ENCODE measurements at regions of chr13 and their contacts with region 1.

Region 1: DNA sequence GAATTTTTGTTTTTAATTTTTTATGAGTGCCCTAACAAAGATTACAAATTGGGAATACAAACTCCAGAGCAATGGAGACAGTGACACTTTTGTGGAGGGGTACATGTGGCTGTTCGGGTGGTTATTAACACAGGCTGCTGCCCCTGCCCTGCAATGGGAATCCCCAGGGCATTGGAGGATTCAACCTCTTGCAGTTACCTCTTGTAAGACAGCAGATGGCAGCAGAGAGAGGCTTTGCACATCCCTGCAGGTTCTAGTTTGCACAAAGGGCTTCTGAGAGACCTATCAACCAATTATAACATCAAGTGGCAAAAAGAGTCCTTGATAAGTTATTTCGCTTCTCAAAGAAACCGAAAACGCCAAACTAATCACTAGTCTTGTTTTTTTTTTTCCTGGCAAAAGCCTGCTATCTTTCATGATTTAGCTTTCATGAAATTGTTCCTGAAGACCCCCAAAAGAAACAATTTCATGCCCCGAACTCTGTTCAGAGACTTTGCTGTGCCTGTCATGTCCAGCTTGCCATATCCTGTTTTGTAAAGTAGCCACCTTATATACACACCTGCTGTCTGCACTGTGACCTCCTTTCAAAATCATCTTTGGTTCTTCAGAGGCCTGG is 10.4 kb downstream of the GJB2 start:
- DNase-seq: no peak
- ATAC-seq: peak; percentile 80 to 83
- H3K4me3 ChIP-seq: no peak overlapping the region
- H3K27ac ChIP-seq: no peak overlapping the region
- H3K4me1 ChIP-seq: no peaks in the 10 kb centered on the region
- H3K27me3 ChIP-seq: peaks cover 9 to 11% (median 11%) of the 10 kb centered on the region in 3 donors
- CTCF ChIP-seq: peak; percentile 20 to 76 (median 48)
- POLR2A ChIP-seq: no peak

Region 2: DNA sequence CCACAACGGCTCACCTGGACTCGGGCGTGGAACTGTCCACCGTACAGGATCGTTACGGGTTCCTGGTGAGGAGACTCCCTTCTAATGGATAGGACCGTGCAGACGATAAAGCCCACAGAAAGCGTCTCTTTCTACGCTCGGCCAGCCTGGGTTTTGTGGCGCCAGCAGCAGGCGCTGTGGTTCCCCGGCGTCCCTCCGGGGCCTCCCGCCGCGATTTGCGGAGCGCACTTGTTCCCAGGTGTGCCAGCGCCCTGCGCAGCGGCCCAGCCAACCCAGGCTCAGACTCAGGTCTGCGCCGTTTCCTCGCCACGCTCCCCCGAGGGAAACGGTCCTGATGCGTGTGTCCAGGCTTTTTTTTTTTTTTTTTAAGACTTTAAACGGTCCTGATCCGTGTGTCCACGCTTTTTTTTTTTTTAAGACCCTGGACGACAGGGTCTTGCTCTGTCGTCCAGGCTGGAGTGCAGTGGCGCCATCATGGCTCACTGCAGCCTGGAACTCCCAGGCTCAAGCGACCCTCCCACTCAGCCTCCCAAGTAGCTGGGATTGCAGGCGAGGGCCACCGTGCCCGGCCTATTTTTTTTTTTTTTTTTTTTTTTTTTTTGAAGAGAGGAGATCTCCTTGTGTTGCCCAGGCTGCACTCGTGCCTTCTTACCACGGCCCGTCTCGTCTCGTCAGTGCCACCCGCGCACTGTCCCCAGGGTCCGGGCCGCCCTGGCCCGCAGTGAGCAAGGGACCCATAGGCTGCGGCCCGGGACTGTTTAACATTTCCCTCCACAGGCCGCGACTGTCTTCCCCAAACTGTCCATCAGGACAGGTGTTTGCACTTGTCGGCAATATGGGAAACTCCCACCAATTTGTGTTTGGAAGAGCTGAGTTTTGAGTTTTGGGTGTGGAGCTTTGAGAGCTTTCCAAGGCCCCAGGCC is 45.3 kb before region 1 on chr13:
- in situ Hi-C with region 1: no loop called
- intact Hi-C with region 1: no loop called
- DNase-seq: no peak
- ATAC-seq: no peak
- H3K4me3 ChIP-seq: peak overlapping the region in 1 of 4 donors; percentile 4
- H3K27ac ChIP-seq: no peak overlapping the region
- H3K4me1 ChIP-seq: peaks cover 13 to 17% of the 10 kb centered on the region in 2 donors
- H3K27me3 ChIP-seq: peaks cover 2 to 17% (median 2%) of the 10 kb centered on the region in 3 donors
- CTCF ChIP-seq: no peak
- POLR2A ChIP-seq: no peak

Region 3: GRCh38 chr13:20294497-20294896 is 112.2 kb after region 1 on chr13:
- in situ Hi-C with region 1: loop called in 1 of 4 experiments (anchors 25 kb)
- intact Hi-C with region 1: no loop called
- DNase-seq: no peak
- ATAC-seq: no peak
- H3K4me3 ChIP-seq: no peak overlapping the region
- H3K27ac ChIP-seq: no peak overlapping the region
- H3K4me1 ChIP-seq: no peaks in the 10 kb centered on the region
- H3K27me3 ChIP-seq: peaks cover 0 to 2% (median 0%) of the 10 kb centered on the region in 3 donors
- CTCF ChIP-seq: no peak
- POLR2A ChIP-seq: no peak

Region 4: DNA sequence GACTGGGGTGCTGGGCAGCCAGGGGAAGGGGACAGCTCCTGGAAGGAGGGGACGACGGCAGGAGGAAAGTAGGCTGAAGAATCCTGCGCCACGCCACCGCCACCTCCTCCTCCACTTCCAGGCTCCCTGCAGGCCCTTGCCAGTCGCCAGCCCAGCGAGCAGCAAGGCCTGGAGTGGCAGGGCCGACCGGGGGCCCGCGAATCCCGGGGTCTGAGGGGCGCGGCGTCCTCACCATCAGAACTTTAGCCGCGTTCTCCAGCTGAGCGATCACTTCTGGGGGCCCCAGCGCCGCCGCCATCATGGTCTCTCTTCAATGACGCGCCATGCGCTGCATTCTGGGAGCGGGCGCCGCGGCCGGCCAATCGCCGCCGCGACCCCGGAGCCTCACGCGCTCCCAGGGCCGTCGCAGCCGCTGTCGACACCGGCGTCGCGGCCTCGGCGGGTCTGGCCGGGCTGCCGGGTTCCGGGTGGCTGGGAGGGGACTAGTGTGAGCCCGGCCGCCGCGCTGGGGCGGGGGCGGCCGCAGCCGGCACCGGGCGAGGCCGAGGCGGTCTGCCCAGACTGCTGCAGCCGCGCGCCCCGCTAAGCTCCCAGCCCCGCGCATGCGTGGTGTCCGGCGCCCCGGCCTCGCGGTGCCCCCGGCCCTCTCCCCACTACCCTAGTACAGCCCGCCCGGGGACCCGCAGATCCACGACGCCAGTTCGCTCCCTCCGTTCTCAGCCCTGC is 720.3 kb after region 1 on chr13 and contains the start of gene XPO4:
- in situ Hi-C with region 1: loop called in 1 of 4 experiments (anchors 25 kb)
- intact Hi-C with region 1: no loop called
- DNase-seq: peak; percentile 49 to 74
- ATAC-seq: peak; percentile 93 to 96
- H3K4me3 ChIP-seq: peak within 1 kb of the TSS; percentile 80 to 97 (median 92)
- H3K27ac ChIP-seq: peak within 1 kb of the TSS; percentile 93 to 99 (median 95)
- H3K4me1 ChIP-seq: peaks cover 10 to 18% of the 10 kb centered on the region in 2 donors
- H3K27me3 ChIP-seq: no peaks in the 10 kb centered on the region
- CTCF ChIP-seq: no peak
- POLR2A ChIP-seq: peak; percentile 70 to 74
- total RNA-seq, gene XPO4: 10.0 to 18.7 (median 14.7) TPM

Region 5: GRCh38 chr13:20924758-20925394 is 742.5 kb after region 1 on chr13:
- in situ Hi-C with region 1: loop called in 2 of 4 experiments (anchors 25 kb)
- intact Hi-C with region 1: no loop called
- DNase-seq: peak; percentile 36 to 57
- ATAC-seq: peak in 1 of 2 donors; percentile 68
- H3K4me3 ChIP-seq: no peak overlapping the region
- H3K27ac ChIP-seq: no peak overlapping the region
- H3K4me1 ChIP-seq: no peaks in the 10 kb centered on the region
- H3K27me3 ChIP-seq: no peaks in the 10 kb centered on the region
- CTCF ChIP-seq: peak; percentile 43 to 84 (median 64)
- POLR2A ChIP-seq: no peak

Measured in gastrocnemius medialis (tissue), 4 donors.